IMR-90 (cell line): ENCODE measurements at regions of chr1 and their contacts with region 1.

Region 1: DNA sequence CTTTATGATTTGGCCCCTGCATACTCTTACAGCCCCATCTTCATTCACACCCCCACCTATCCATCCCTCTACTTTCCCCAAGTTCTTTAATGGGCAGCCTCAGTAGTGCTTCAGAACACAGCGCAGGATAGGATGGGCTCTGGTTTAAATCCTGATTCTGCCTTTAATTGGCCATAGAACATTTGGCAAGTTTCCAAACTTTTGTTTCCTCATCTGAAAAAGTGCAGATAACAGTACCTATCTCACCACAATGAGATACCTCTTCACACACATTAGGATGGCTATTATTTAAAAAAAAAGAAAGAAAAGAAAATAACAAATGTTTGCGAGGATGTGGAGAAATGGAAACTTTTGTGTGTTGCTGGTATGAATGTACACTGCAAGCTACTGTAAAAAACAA is 142.5 kb upstream of the VANGL1 start:
- DNase-seq: no peak
- ATAC-seq: no peak
- H3K4me3 ChIP-seq: no peak overlapping the region
- H3K27ac ChIP-seq: no peak overlapping the region
- H3K4me1 ChIP-seq: peaks cover 8% of the 10 kb centered on the region
- H3K27me3 ChIP-seq: no peaks in the 10 kb centered on the region
- CTCF ChIP-seq: no peak
- POLR2A ChIP-seq: no peak
- RAD21 ChIP-seq: no peak

Region 2: DNA sequence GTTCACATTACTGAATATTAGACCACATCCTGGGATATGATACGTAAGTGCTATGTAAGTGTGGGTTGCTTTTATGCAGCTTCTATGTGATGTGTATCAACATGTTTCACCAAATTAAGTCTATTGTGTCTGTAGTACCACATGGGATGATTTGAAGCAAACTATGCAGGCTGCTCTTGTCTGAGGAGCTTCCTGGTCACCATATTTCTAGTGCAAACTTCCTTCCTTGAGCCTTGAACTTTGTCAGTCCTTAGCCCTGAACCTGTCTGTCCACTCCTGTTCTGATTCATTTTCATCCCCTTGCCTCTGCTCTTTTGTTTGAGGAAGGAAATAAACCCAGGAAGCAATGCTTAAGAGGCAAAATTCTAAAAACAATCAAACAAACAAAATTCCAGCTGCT is 25.0 kb after region 1 on chr1:
- CTCF ChIA-PET with region 1: no interaction called
- POLR2A ChIA-PET with region 1: no interaction called
- dilution Hi-C with region 1: no loop called
- in situ Hi-C with region 1: no loop called
- intact Hi-C with region 1: loop called (anchors 2 kb)
- DNase-seq: no peak
- ATAC-seq: no peak
- H3K4me3 ChIP-seq: no peak overlapping the region
- H3K27ac ChIP-seq: no peak overlapping the region
- H3K4me1 ChIP-seq: no peaks in the 10 kb centered on the region
- H3K27me3 ChIP-seq: no peaks in the 10 kb centered on the region
- CTCF ChIP-seq: no peak
- POLR2A ChIP-seq: no peak
- RAD21 ChIP-seq: no peak